Transverse colon (tissue), 4 donors: ENCODE measurements at regions of chr16 and their contacts with region 1.

Region 1: GRCh38 chr16:9763505-9763904 is 418.7 kb downstream of the GRIN2A start:
- DNase-seq: no peak
- H3K4me3 ChIP-seq: no peak overlapping the region
- H3K27ac ChIP-seq: no peak overlapping the region
- H3K4me1 ChIP-seq: no peaks in the 10 kb centered on the region
- H3K27me3 ChIP-seq: no peaks in the 10 kb centered on the region
- CTCF ChIP-seq: no peak
- EP300 ChIP-seq: no peak
- POLR2A ChIP-seq: no peak

Region 2: GRCh38 chr16:9713156-9713555 is 50.3 kb before region 1 on chr16:
- in situ Hi-C with region 1: no loop called
- intact Hi-C with region 1: loop called (anchors 1 kb)
- DNase-seq: no peak
- H3K4me3 ChIP-seq: no peak overlapping the region
- H3K27ac ChIP-seq: no peak overlapping the region
- H3K4me1 ChIP-seq: no peaks in the 10 kb centered on the region
- H3K27me3 ChIP-seq: no peaks in the 10 kb centered on the region
- CTCF ChIP-seq: no peak
- EP300 ChIP-seq: no peak
- POLR2A ChIP-seq: no peak

Region 3: GRCh38 chr16:9996221-9996620 is 232.7 kb after region 1 on chr16:
- in situ Hi-C with region 1: no loop called
- intact Hi-C with region 1: no loop called
- DNase-seq: no peak
- H3K4me3 ChIP-seq: no peak overlapping the region
- H3K27ac ChIP-seq: no peak overlapping the region
- H3K4me1 ChIP-seq: no peaks in the 10 kb centered on the region
- H3K27me3 ChIP-seq: no peaks in the 10 kb centered on the region
- CTCF ChIP-seq: no peak
- EP300 ChIP-seq: no peak
- POLR2A ChIP-seq: no peak